Endothelial cell of umbilical vein (primary cell): ENCODE measurements at regions of chr3 and their contacts with region 1.

Region 1: GRCh38 chr3:64685800-64686445 is 1.9 kb downstream of the ADAMTS9 start:
- DNase-seq: peak; percentile 96
- H3K4me3 ChIP-seq: peak overlapping the region; percentile 61 to 89 (median 88)
- H3K27ac ChIP-seq: peak overlapping the region; percentile 84
- H3K4me1 ChIP-seq: peaks cover 17% of the 10 kb centered on the region
- H3K27me3 ChIP-seq: no peaks in the 10 kb centered on the region
- CTCF ChIP-seq: peak; percentile 10 to 51
- POLR2A ChIP-seq: peak; percentile 70

Region 2: GRCh38 chr3:64651741-64652241 is 34.1 kb before region 1 on chr3:
- CTCF ChIA-PET with region 1: interaction called, 5 read pairs
- POLR2A ChIA-PET with region 1: interaction called, 3 read pairs
- dilution Hi-C with region 1: no loop called
- intact Hi-C with region 1: loop called (anchors 1 kb)
- DNase-seq: peak; percentile 14
- H3K4me3 ChIP-seq: no peak overlapping the region
- H3K27ac ChIP-seq: no peak overlapping the region
- H3K4me1 ChIP-seq: peaks cover 22% of the 10 kb centered on the region
- H3K27me3 ChIP-seq: no peaks in the 10 kb centered on the region
- CTCF ChIP-seq: no peak
- POLR2A ChIP-seq: no peak

Region 3: DNA sequence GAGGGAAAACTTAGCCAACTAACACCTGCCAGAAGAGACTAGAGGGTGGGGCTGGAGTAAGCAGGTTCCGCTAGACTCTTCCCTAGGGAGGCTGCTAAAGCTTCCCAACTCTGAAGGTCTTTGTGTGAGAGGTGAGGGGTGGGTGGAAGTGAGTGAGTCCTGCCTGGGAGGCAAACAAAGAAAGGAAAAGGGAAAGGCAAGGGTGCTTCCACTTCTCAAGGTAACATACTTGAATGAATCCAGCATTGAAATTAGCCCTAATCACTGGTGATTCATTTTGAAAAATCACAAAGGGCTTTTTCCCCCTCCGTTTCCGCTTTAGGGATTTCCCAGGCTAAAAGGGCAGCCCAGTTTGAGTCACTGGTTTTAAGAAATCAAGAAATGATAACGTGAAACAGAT is 222.4 kb after region 1 on chr3:
- CTCF ChIA-PET with region 1: no interaction called
- POLR2A ChIA-PET with region 1: no interaction called
- dilution Hi-C with region 1: no loop called
- intact Hi-C with region 1: loop called (anchors 5 kb)
- DNase-seq: peak; percentile 90
- H3K4me3 ChIP-seq: peak overlapping the region in 1 of 3 experiments; percentile 20
- H3K27ac ChIP-seq: peak overlapping the region; percentile 89
- H3K4me1 ChIP-seq: peaks cover 30% of the 10 kb centered on the region
- H3K27me3 ChIP-seq: no peaks in the 10 kb centered on the region
- CTCF ChIP-seq: no peak
- POLR2A ChIP-seq: no peak

Region 4: DNA sequence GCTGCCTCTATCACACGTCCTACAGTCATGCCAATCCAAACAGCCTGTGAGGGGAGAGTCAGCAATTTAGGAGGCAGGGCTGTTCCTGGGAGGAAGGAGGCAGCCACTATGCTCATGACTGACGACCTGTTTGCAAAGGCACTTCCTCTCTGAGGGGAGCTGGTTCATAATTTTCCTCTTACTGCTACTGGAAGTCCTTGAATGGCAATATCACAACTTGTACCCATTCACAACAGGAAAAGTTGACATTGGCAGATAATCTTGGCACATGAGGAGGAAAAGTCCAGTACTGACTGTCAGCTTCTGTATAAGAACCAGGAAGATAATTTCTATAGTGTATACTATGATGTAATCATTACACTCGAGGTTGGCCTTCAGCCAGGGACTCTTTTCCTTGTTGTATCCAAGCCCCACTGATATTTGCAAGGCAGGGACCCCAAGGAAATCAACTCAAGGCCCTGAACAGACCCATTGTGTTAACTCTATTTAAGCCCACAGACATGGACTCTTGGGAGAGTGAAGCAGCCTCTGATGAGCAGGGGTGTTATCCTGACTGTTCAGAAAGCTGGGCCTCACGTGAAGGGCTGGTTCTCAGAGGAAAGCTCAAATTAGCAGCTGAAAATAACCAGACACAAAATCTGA is 269.2 kb after region 1 on chr3:
- CTCF ChIA-PET with region 1: interaction called, 3 read pairs
- POLR2A ChIA-PET with region 1: no interaction called
- dilution Hi-C with region 1: no loop called
- intact Hi-C with region 1: loop called (anchors 2 kb)
- DNase-seq: peak; percentile 96
- H3K4me3 ChIP-seq: no peak overlapping the region
- H3K27ac ChIP-seq: peak overlapping the region; percentile 19
- H3K4me1 ChIP-seq: peaks cover 17% of the 10 kb centered on the region
- H3K27me3 ChIP-seq: no peaks in the 10 kb centered on the region
- CTCF ChIP-seq: no peak
- POLR2A ChIP-seq: no peak

Region 5: GRCh38 chr3:65245133-65246063 is 559.5 kb after region 1 on chr3:
- CTCF ChIA-PET with region 1: interaction called, 3 read pairs
- POLR2A ChIA-PET with region 1: no interaction called
- dilution Hi-C with region 1: no loop called
- intact Hi-C with region 1: loop called (anchors 10 kb)
- DNase-seq: peak; percentile 59
- H3K4me3 ChIP-seq: no peak overlapping the region
- H3K27ac ChIP-seq: no peak overlapping the region
- H3K4me1 ChIP-seq: no peaks in the 10 kb centered on the region
- H3K27me3 ChIP-seq: no peaks in the 10 kb centered on the region
- CTCF ChIP-seq: peak; percentile 26 to 33
- POLR2A ChIP-seq: no peak